CD8-positive, alpha-beta T cell (primary cell): ENCODE measurements at regions of chr5 and their contacts with region 1.

Region 1: GRCh38 chr5:132746954-132747615 is at the start of gene CCNI2:
- DNase-seq: peak; percentile 34 to 82 (median 65)
- ATAC-seq: peak; percentile 85
- H3K4me3 ChIP-seq: peak within 1 kb of the TSS; percentile 57 to 59
- H3K4me3 Mint-ChIP-seq: peak within 1 kb of the TSS; percentile 84
- H3K27ac ChIP-seq: peak within 1 kb of the TSS; percentile 29 to 36
- H3K27ac Mint-ChIP-seq: peak within 1 kb of the TSS; percentile 67
- H3K4me1 ChIP-seq: peaks cover 8% of the 10 kb centered on the region
- H3K4me1 Mint-ChIP-seq: peaks cover 11% of the 10 kb centered on the region
- H3K27me3 ChIP-seq: peaks cover 0 to 3% of the 10 kb centered on the region in 2 experiments
- H3K27me3 Mint-ChIP-seq: no peaks in the 10 kb centered on the region
- CTCF ChIP-seq: peak; percentile 45
- total RNA-seq, gene CCNI2: 4.4 to 6.3 TPM

Region 2: GRCh38 chr5:131825404-131826013 is 921.6 kb before region 1 on chr5:
- CTCF ChIA-PET with region 1: no interaction called
- POLR2A ChIA-PET with region 1: no interaction called
- intact Hi-C with region 1: no loop called
- DNase-seq: no peak
- ATAC-seq: no peak
- H3K4me3 ChIP-seq: no peak overlapping the region
- H3K4me3 Mint-ChIP-seq: no peak overlapping the region
- H3K27ac ChIP-seq: no peak overlapping the region
- H3K27ac Mint-ChIP-seq: no peak overlapping the region
- H3K4me1 ChIP-seq: no peaks in the 10 kb centered on the region
- H3K4me1 Mint-ChIP-seq: peaks cover 5% of the 10 kb centered on the region
- H3K27me3 ChIP-seq: no peaks in the 10 kb centered on the region
- H3K27me3 Mint-ChIP-seq: peaks cover 2% of the 10 kb centered on the region
- CTCF ChIP-seq: no peak

Region 3: GRCh38 chr5:132714456-132715307 is 32.4 kb before region 1 on chr5:
- CTCF ChIA-PET with region 1: no interaction called
- POLR2A ChIA-PET with region 1: no interaction called
- intact Hi-C with region 1: loop called in 1 of 2 experiments (anchors 1 kb)
- DNase-seq: peak in 2 of 9 experiments; percentile 14 to 41
- ATAC-seq: no peak
- H3K4me3 ChIP-seq: no peak overlapping the region
- H3K4me3 Mint-ChIP-seq: no peak overlapping the region
- H3K27ac ChIP-seq: no peak overlapping the region
- H3K27ac Mint-ChIP-seq: no peak overlapping the region
- H3K4me1 ChIP-seq: no peaks in the 10 kb centered on the region
- H3K4me1 Mint-ChIP-seq: peaks cover 6% of the 10 kb centered on the region
- H3K27me3 ChIP-seq: no peaks in the 10 kb centered on the region
- H3K27me3 Mint-ChIP-seq: no peaks in the 10 kb centered on the region
- CTCF ChIP-seq: peak; percentile 79

Region 4: GRCh38 chr5:132813599-132814502 is 66.8 kb after region 1 on chr5:
- CTCF ChIA-PET with region 1: no interaction called
- POLR2A ChIA-PET with region 1: interaction called, 4 read pairs
- intact Hi-C with region 1: loop called in 1 of 2 experiments (anchors 2 kb)
- DNase-seq: peak in 4 of 9 experiments; percentile 27 to 64 (median 52)
- ATAC-seq: peak; percentile 70
- H3K4me3 ChIP-seq: peak overlapping the region in 1 of 2 experiments; percentile 26
- H3K4me3 Mint-ChIP-seq: peak overlapping the region; percentile 26
- H3K27ac ChIP-seq: no peak overlapping the region
- H3K27ac Mint-ChIP-seq: no peak overlapping the region
- H3K4me1 ChIP-seq: peaks cover 7% of the 10 kb centered on the region
- H3K4me1 Mint-ChIP-seq: peaks cover 9% of the 10 kb centered on the region
- H3K27me3 ChIP-seq: peaks cover 12 to 16% of the 10 kb centered on the region in 2 experiments
- H3K27me3 Mint-ChIP-seq: peaks cover 36% of the 10 kb centered on the region
- CTCF ChIP-seq: no peak

Region 5: DNA sequence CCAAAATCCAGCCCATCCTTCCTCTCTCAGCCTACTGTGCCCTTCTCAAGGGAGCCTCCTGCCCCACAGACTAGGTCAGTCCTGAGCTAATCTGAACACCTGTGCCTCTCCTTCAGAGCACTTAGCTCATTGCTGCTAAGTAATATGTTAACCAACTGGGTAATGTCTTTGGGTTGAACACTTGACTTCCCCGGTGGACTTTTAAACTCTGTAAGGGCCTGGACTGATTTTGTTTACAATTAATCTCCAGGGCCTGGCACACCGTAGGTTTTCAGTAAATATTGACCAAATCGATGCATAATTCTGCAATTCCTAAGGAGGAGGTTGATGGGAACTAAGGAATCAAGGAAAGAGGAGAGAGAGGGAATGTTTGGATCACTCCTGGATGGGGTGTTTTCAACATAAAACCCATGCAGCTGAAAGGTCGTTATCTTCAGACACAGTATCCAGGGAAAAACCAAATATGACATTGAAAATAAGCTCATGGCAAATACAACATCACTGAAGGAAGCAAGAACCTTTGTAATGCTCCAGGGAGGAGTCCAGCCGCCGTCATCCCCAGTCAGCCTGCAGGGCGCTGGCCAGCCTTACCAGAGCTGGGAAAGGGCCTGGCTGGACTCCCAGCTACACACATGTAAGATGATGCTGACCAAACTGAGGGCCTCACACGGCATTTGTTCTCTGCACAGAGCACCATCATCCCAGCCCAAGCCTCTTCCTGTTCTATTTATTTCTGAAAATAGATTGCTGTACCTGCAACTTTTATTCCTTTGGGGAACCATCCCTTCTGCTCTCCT is 1055.1 kb after region 1 on chr5:
- CTCF ChIA-PET with region 1: no interaction called
- POLR2A ChIA-PET with region 1: no interaction called
- intact Hi-C with region 1: no loop called
- DNase-seq: no peak
- ATAC-seq: no peak
- H3K4me3 ChIP-seq: no peak overlapping the region
- H3K4me3 Mint-ChIP-seq: no peak overlapping the region
- H3K27ac ChIP-seq: no peak overlapping the region
- H3K27ac Mint-ChIP-seq: no peak overlapping the region
- H3K4me1 ChIP-seq: no peaks in the 10 kb centered on the region
- H3K4me1 Mint-ChIP-seq: peaks cover 3% of the 10 kb centered on the region
- H3K27me3 ChIP-seq: peaks cover 0 to 2% of the 10 kb centered on the region in 2 experiments
- H3K27me3 Mint-ChIP-seq: peaks cover 12% of the 10 kb centered on the region
- CTCF ChIP-seq: no peak